ENCODE measurements at regions of chr12 and their contacts with region 1.

Region 1: DNA sequence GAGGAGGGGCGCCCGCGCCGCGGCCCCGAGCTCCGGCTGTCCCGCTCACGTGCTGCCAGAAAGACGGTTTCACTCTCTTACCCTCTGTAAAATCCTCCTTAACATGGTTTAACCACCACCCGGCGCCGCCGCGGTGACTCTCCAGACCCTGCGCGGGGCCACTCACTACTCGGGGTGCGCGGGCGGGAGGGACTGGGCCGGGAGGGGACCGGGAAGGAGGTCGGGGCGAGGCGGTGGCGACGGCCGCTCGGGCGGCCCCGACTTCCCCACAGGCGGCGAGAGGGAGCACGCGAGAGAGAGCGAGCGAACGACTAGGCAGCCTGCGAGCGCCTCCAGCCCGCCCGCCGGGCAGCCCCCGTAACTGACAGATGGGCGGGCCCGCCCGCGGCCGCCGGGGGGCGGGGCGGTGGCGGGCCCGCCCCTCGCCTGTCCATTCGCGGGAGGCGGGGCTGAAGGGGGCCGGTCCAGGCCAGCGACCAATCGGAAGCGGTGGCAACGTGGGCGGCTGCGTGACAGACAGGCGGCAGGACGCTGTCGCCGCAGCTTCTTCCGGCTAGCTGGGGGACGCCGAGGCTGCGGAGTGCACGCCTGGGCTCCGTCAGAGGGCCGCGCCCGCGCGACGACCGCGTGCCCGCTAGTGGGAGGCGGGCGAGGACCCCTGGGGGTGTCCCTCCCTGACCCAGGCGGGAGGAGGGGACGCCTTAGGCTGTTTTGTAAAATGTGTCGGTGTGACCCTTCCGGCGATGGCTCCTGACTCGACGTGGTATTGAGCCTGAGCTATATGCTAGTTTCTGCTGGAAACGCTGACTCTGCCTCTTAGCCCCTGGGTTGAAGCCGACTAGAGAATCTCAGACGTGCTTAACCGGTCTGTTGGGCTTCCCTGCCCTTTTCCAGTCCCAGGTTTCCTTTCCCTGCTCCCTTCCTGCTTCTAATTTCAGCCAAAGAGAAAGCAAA is at the start of gene EEA1:
- DNase-seq: peak; percentile 88 to 97 (median 94)
- ATAC-seq: peak; percentile 77
- H3K4me3 ChIP-seq: peak within 1 kb of the TSS; percentile 81
- H3K4me3 Mint-ChIP-seq: peak within 1 kb of the TSS; percentile 91
- H3K27ac ChIP-seq: peak within 1 kb of the TSS; percentile 86 to 90
- H3K27ac Mint-ChIP-seq: peak within 1 kb of the TSS; percentile 94
- H3K4me1 ChIP-seq: peaks cover 23% of the 10 kb centered on the region
- H3K4me1 Mint-ChIP-seq: peaks cover 42% of the 10 kb centered on the region
- H3K27me3 ChIP-seq: no peaks in the 10 kb centered on the region
- H3K27me3 Mint-ChIP-seq: no peaks in the 10 kb centered on the region
- CTCF ChIP-seq: peak; percentile 28
- total RNA-seq, gene EEA1: 10.5 to 11.1 TPM

Region 2: GRCh38 chr12:92253301-92253700 is 675.9 kb before region 1 on chr12:
- CTCF ChIA-PET with region 1: no interaction called
- POLR2A ChIA-PET with region 1: no interaction called
- intact Hi-C with region 1: no loop called
- DNase-seq: no peak
- ATAC-seq: no peak
- H3K4me3 ChIP-seq: no peak overlapping the region
- H3K4me3 Mint-ChIP-seq: no peak overlapping the region
- H3K27ac ChIP-seq: no peak overlapping the region
- H3K27ac Mint-ChIP-seq: no peak overlapping the region
- H3K4me1 ChIP-seq: peaks cover 2% of the 10 kb centered on the region
- H3K4me1 Mint-ChIP-seq: peaks cover 22% of the 10 kb centered on the region
- H3K27me3 ChIP-seq: no peaks in the 10 kb centered on the region
- H3K27me3 Mint-ChIP-seq: no peaks in the 10 kb centered on the region
- CTCF ChIP-seq: no peak

Region 3: GRCh38 chr12:92827836-92828431 is 101.3 kb before region 1 on chr12:
- CTCF ChIA-PET with region 1: interaction called, 7 read pairs
- POLR2A ChIA-PET with region 1: interaction called, 10 read pairs
- intact Hi-C with region 1: loop called (anchors 5 kb)
- DNase-seq: peak in 12 of 14 experiments; percentile 10 to 67 (median 32)
- ATAC-seq: peak; percentile 79
- H3K4me3 ChIP-seq: no peak overlapping the region
- H3K4me3 Mint-ChIP-seq: no peak overlapping the region
- H3K27ac ChIP-seq: no peak overlapping the region
- H3K27ac Mint-ChIP-seq: no peak overlapping the region
- H3K4me1 ChIP-seq: no peaks in the 10 kb centered on the region
- H3K4me1 Mint-ChIP-seq: peaks cover 11% of the 10 kb centered on the region
- H3K27me3 ChIP-seq: no peaks in the 10 kb centered on the region
- H3K27me3 Mint-ChIP-seq: no peaks in the 10 kb centered on the region
- CTCF ChIP-seq: peak; percentile 65

Region 4: DNA sequence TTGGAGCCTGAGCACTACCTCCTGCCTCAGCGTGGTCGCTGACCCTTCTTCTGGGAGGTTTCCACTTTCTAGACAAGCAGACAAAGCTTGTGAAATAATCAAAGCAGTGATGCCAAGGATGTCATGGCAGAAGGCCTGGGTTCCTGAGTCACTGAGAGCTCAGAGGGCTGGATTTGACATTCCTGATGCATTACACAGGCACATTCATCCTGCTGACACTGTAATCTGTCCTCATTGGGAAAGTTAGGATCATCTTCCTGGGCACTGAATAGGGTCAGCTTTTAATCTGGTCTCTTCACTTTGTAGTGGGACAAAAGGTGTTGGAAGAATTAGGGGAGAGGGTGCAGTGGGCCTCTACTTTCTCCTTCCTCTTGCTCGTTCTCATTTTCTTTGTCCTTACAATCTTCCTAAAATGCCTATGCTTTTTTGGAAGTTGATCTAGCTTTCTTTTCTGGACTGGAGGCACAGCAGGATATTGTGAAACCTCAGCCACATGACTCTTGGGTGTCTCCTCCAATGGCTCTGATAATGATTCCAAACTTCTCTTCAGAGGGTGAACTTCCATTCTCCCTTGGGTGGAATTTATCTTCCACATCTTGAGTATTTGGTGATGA is 29.7 kb before region 1 on chr12:
- CTCF ChIA-PET with region 1: interaction called, 4 read pairs
- POLR2A ChIA-PET with region 1: interaction called, 84 read pairs
- intact Hi-C with region 1: loop called in 1 of 2 experiments (anchors 5 kb)
- DNase-seq: no peak
- ATAC-seq: no peak
- H3K4me3 ChIP-seq: no peak overlapping the region
- H3K4me3 Mint-ChIP-seq: no peak overlapping the region
- H3K27ac ChIP-seq: no peak overlapping the region
- H3K27ac Mint-ChIP-seq: peak overlapping the region; percentile 70
- H3K4me1 ChIP-seq: peaks cover 7% of the 10 kb centered on the region
- H3K4me1 Mint-ChIP-seq: peaks cover 38% of the 10 kb centered on the region
- H3K27me3 ChIP-seq: no peaks in the 10 kb centered on the region
- H3K27me3 Mint-ChIP-seq: no peaks in the 10 kb centered on the region
- CTCF ChIP-seq: no peak

Region 5: GRCh38 chr12:92977326-92977725 is 48.1 kb after region 1 on chr12:
- CTCF ChIA-PET with region 1: no interaction called
- POLR2A ChIA-PET with region 1: interaction called, 9 read pairs
- intact Hi-C with region 1: loop called in 1 of 2 experiments (anchors 2 kb)
- DNase-seq: peak in 4 of 14 experiments; percentile 9 to 19 (median 15)
- ATAC-seq: peak; percentile 78
- H3K4me3 ChIP-seq: peak overlapping the region; percentile 26
- H3K4me3 Mint-ChIP-seq: peak overlapping the region; percentile 72
- H3K27ac ChIP-seq: no peak overlapping the region
- H3K27ac Mint-ChIP-seq: peak overlapping the region; percentile 81
- H3K4me1 ChIP-seq: peaks cover 5% of the 10 kb centered on the region
- H3K4me1 Mint-ChIP-seq: peaks cover 23% of the 10 kb centered on the region
- H3K27me3 ChIP-seq: no peaks in the 10 kb centered on the region
- H3K27me3 Mint-ChIP-seq: no peaks in the 10 kb centered on the region
- CTCF ChIP-seq: no peak

Region 6: DNA sequence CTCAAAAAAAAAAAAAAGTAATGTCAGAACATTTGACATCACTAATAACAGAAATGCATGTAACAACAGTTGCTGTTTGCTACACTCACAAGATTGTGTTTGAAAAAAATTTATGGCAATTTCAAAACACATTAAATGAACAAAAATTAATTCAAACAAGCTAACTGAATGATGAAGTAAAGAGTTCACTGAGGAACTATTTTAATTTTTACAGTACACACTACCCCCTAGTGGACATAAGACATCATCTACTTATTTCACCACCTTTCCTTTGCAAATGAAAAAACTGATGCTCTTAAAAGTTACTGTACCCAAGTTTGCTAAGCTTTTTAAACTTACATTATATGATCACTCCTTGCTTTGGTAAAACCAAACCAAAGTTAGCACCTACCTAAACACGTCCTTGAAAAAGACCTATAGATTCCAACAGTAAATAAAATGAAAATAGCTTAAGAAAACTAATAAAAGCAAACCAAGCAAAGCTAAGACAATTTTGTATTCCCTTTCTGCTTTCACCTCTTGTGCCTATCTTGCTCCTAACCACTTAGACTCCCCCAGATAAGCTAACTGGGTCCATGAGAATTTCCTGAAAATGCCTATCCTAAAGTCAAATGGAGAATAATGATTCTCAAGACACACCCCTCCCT is 490.3 kb after region 1 on chr12:
- CTCF ChIA-PET with region 1: interaction called, 4 read pairs
- POLR2A ChIA-PET with region 1: interaction called, 8 read pairs
- intact Hi-C with region 1: loop called in 1 of 2 experiments (anchors 10 kb)
- DNase-seq: peak in 3 of 14 experiments; percentile 66 to 73 (median 72)
- ATAC-seq: peak; percentile 74
- H3K4me3 ChIP-seq: no peak overlapping the region
- H3K4me3 Mint-ChIP-seq: peak overlapping the region; percentile 5
- H3K27ac ChIP-seq: no peak overlapping the region
- H3K27ac Mint-ChIP-seq: peak overlapping the region; percentile 31
- H3K4me1 ChIP-seq: peaks cover 21% of the 10 kb centered on the region
- H3K4me1 Mint-ChIP-seq: peaks cover 91% of the 10 kb centered on the region
- H3K27me3 ChIP-seq: no peaks in the 10 kb centered on the region
- H3K27me3 Mint-ChIP-seq: no peaks in the 10 kb centered on the region
- CTCF ChIP-seq: peak; percentile 76

Region 7: GRCh38 chr12:93461503-93461902 is 532.3 kb after region 1 on chr12:
- CTCF ChIA-PET with region 1: no interaction called
- POLR2A ChIA-PET with region 1: no interaction called
- intact Hi-C with region 1: no loop called
- DNase-seq: peak in 1 of 14 experiments; percentile 28
- ATAC-seq: no peak
- H3K4me3 ChIP-seq: no peak overlapping the region
- H3K4me3 Mint-ChIP-seq: no peak overlapping the region
- H3K27ac ChIP-seq: no peak overlapping the region
- H3K27ac Mint-ChIP-seq: no peak overlapping the region
- H3K4me1 ChIP-seq: no peaks in the 10 kb centered on the region
- H3K4me1 Mint-ChIP-seq: no peaks in the 10 kb centered on the region
- H3K27me3 ChIP-seq: peaks cover 0 to 2% of the 10 kb centered on the region in 2 experiments
- H3K27me3 Mint-ChIP-seq: no peaks in the 10 kb centered on the region
- CTCF ChIP-seq: no peak

Measured in CD4-positive, alpha-beta T cell (primary cell).